Gastrocnemius medialis (tissue), 4 donors: ENCODE measurements at regions of chr9 and their contacts with region 1.

Region 1: GRCh38 chr9:21812946-21813568 is 10.6 kb downstream of the MTAP start:
- DNase-seq: peak; percentile 25 to 64
- ATAC-seq: peak; percentile 70 to 84
- H3K4me3 ChIP-seq: no peak overlapping the region
- H3K27ac ChIP-seq: peak overlapping the region in 1 of 4 donors; percentile 3
- H3K4me1 ChIP-seq: peaks cover 10 to 17% of the 10 kb centered on the region in 2 donors
- H3K27me3 ChIP-seq: no peaks in the 10 kb centered on the region
- CTCF ChIP-seq: peak; percentile 71 to 89 (median 82)
- POLR2A ChIP-seq: no peak

Region 2: GRCh38 chr9:21836437-21837161 is 23.5 kb after region 1 on chr9:
- in situ Hi-C with region 1: no loop called
- intact Hi-C with region 1: loop called (anchors 2 kb)
- DNase-seq: peak; percentile 25 to 49
- ATAC-seq: peak; percentile 87 to 95
- H3K4me3 ChIP-seq: no peak overlapping the region
- H3K27ac ChIP-seq: peak overlapping the region; percentile 74 to 84 (median 80)
- H3K4me1 ChIP-seq: peaks cover 17 to 37% of the 10 kb centered on the region in 2 donors
- H3K27me3 ChIP-seq: no peaks in the 10 kb centered on the region
- CTCF ChIP-seq: no peak
- POLR2A ChIP-seq: no peak

Region 3: GRCh38 chr9:22008736-22009562 is 195.9 kb after region 1 on chr9 and contains the start of gene CDKN2B:
- in situ Hi-C with region 1: loop called (anchors 5 to 25 kb)
- intact Hi-C with region 1: loop called (anchors 1 kb)
- DNase-seq: peak; percentile 88 to 94
- ATAC-seq: peak; percentile 91 to 93
- H3K4me3 ChIP-seq: peak within 1 kb of the TSS; percentile 68 to 87 (median 75)
- H3K27ac ChIP-seq: peak within 1 kb of the TSS; percentile 87 to 94 (median 88)
- H3K4me1 ChIP-seq: peaks cover 15% of the 10 kb centered on the region in 2 donors
- H3K27me3 ChIP-seq: peaks cover 0 to 24% (median 0%) of the 10 kb centered on the region in 3 donors
- CTCF ChIP-seq: peak; percentile 66 to 95 (median 90)
- POLR2A ChIP-seq: peak; percentile 62 to 89
- total RNA-seq, gene CDKN2B: 4.5 to 25.1 (median 15.6) TPM

Region 4: DNA sequence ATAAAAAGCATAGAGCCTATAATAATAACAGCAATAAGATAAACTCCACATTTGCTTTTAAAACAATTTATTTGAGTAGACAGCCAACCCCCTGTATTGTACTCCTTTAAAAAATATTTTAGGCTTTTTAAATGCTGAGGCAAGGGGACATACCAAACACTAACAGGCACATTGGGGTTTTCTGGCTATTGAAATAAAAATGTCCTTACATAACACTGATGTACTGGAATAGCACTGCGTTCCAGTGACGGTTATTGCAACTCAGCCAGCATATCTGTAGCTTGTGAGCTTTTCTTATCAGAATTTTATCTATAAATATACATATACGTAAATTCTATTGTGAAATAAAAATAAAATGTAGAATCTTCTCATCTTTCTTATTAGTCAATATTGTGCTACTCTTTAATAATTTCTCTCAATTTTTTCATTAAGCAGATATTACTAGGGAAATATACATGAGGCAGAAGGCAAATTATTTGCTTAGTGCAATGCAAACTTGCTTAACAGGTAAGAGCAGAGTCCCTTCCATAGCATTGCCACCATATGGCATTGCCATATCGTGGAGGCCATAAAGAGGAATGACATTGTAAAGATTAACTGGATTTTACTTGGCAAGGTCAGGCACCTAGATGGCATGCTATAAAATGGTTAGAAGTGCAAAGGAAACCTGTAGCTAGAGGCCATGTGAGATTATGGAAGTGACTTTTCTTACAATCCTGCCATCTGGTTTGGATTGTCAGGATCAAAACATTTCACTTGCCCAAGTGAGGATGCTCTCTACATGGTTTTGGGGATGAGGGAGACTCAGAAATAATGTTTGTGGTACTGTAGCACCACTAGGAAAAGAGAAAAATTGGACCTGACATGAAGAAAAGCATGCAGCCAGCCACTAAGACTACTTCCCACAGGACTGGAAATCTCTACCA is 290.9 kb after region 1 on chr9:
- in situ Hi-C with region 1: loop called in 1 of 4 experiments (anchors 25 kb)
- intact Hi-C with region 1: loop called (anchors 5 kb)
- DNase-seq: no peak
- ATAC-seq: peak; percentile 38 to 51
- H3K4me3 ChIP-seq: no peak overlapping the region
- H3K27ac ChIP-seq: peak overlapping the region; percentile 37 to 76 (median 62)
- H3K4me1 ChIP-seq: peaks cover 20 to 29% of the 10 kb centered on the region in 2 donors
- H3K27me3 ChIP-seq: no peaks in the 10 kb centered on the region
- CTCF ChIP-seq: no peak
- POLR2A ChIP-seq: no peak

Region 5: GRCh38 chr9:22238809-22239684 is 426.0 kb after region 1 on chr9:
- in situ Hi-C with region 1: loop called (anchors 10 kb)
- intact Hi-C with region 1: loop called (anchors 1 kb)
- DNase-seq: no peak
- ATAC-seq: peak; percentile 30 to 66
- H3K4me3 ChIP-seq: no peak overlapping the region
- H3K27ac ChIP-seq: no peak overlapping the region
- H3K4me1 ChIP-seq: peaks cover 0 to 4% of the 10 kb centered on the region in 2 donors
- H3K27me3 ChIP-seq: no peaks in the 10 kb centered on the region
- CTCF ChIP-seq: peak in 2 of 5 experiments; percentile 35 to 41
- POLR2A ChIP-seq: no peak

Region 6: GRCh38 chr9:22446950-22447617 is 634.0 kb after region 1 on chr9:
- in situ Hi-C with region 1: loop called (anchors 5 to 10 kb)
- intact Hi-C with region 1: loop called (anchors 1 kb)
- DNase-seq: peak; percentile 30 to 53
- ATAC-seq: peak; percentile 84 to 87
- H3K4me3 ChIP-seq: peak overlapping the region; percentile 70 to 89 (median 78)
- H3K27ac ChIP-seq: peak overlapping the region; percentile 75 to 87 (median 83)
- H3K4me1 ChIP-seq: peaks cover 11 to 14% of the 10 kb centered on the region in 2 donors
- H3K27me3 ChIP-seq: no peaks in the 10 kb centered on the region
- CTCF ChIP-seq: peak in 2 of 5 experiments; percentile 21 to 24
- POLR2A ChIP-seq: no peak